K562 (cell line): ENCODE measurements at regions of chr4 and their contacts with region 1.

Region 1: GRCh38 chr4:28575297-28575696 is 1714.7 kb downstream of the STIM2 start:
- DNase-seq: no peak
- ATAC-seq: no peak
- H3K4me3 ChIP-seq: no peak overlapping the region
- H3K27ac ChIP-seq: no peak overlapping the region
- H3K4me1 ChIP-seq: no peaks in the 10 kb centered on the region
- H3K27me3 ChIP-seq: no peaks in the 10 kb centered on the region
- CTCF ChIP-seq: no peak
- EP300 ChIP-seq: no peak
- POLR2A ChIP-seq: no peak
- RAD21 ChIP-seq: no peak

Region 2: DNA sequence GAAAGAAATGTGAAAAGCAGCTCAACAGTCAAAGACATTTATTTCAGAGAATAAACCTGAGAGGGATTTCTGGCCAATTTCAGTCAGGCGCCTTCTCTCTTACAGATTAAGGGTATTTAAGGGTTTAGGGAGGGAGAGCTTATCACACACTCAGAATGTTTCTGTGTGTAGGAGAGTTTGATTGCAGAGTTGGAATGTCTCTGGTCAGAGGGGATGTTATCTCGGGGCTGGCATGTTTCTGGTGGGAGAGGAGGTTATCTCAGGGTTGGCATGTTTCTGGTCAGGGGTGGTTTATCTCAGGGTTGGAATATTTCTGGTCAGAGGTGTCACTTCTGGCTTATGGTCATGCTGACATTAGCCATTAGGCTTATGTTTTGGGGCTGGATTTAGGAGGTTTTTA is 224.4 kb after region 1 on chr4:
- CTCF ChIA-PET with region 1: no interaction called
- POLR2A ChIA-PET with region 1: no interaction called
- in situ Hi-C with region 1: loop called (anchors 10 kb)
- intact Hi-C with region 1: no loop called
- DNase-seq: no peak
- ATAC-seq: no peak
- H3K4me3 ChIP-seq: no peak overlapping the region
- H3K27ac ChIP-seq: no peak overlapping the region
- H3K4me1 ChIP-seq: no peaks in the 10 kb centered on the region
- H3K27me3 ChIP-seq: no peaks in the 10 kb centered on the region
- CTCF ChIP-seq: no peak
- EP300 ChIP-seq: no peak
- POLR2A ChIP-seq: no peak
- RAD21 ChIP-seq: no peak

Region 3: DNA sequence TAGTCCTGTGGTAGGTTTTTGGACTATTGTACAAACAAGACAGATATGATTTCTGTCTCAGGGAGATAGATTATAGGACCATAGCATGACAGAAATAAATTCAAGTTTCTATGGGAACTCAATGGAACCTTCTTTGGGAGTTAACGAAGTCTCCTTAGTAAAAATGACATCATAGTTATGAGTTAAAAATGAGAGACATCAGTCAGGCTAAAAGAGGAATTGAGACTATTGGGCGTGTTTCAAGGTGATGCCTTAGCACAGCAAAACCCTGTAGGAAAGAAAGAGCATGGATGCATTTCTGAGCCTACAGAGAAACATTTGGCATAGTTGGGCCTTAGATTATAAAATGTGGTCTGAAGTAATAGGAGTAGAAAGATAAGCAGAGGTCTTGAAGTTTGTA is 235.7 kb after region 1 on chr4:
- CTCF ChIA-PET with region 1: no interaction called
- POLR2A ChIA-PET with region 1: no interaction called
- in situ Hi-C with region 1: loop called (anchors 10 kb)
- intact Hi-C with region 1: loop called (anchors 1 kb)
- DNase-seq: no peak
- ATAC-seq: no peak
- H3K4me3 ChIP-seq: no peak overlapping the region
- H3K27ac ChIP-seq: no peak overlapping the region
- H3K4me1 ChIP-seq: no peaks in the 10 kb centered on the region
- H3K27me3 ChIP-seq: no peaks in the 10 kb centered on the region
- CTCF ChIP-seq: no peak
- EP300 ChIP-seq: no peak
- POLR2A ChIP-seq: no peak
- RAD21 ChIP-seq: no peak